CD8-positive, alpha-beta T cell (primary cell): ENCODE measurements at regions of chr2 and their contacts with region 1.

Region 1: DNA sequence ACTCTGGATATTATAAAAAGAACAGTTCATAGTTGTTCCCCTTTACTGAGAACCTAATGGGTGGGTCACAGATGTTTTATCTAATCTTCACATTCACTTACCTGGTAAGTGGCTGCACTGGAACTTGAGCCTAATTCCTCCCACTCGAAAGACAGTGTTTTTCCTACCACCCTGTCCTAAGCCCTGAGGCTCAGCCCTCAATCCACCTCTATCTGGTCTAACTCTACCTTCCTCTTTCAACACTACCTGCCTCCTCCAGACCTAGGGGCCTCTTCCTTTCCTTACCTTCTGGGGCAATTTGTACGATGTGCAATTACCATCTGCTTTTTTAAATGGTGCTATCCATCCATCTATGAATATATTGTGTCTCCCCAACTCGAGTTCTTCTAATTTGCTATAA is 9.7 kb upstream of the KIF3C start:
- DNase-seq: no peak
- ATAC-seq: no peak
- H3K4me3 ChIP-seq: no peak overlapping the region
- H3K4me3 Mint-ChIP-seq: peak overlapping the region; percentile 79
- H3K27ac ChIP-seq: no peak overlapping the region
- H3K27ac Mint-ChIP-seq: no peak overlapping the region
- H3K4me1 ChIP-seq: no peaks in the 10 kb centered on the region
- H3K4me1 Mint-ChIP-seq: peaks cover 6% of the 10 kb centered on the region
- H3K27me3 ChIP-seq: peaks cover 0 to 2% of the 10 kb centered on the region in 2 experiments
- H3K27me3 Mint-ChIP-seq: no peaks in the 10 kb centered on the region
- CTCF ChIP-seq: no peak

Region 2: DNA sequence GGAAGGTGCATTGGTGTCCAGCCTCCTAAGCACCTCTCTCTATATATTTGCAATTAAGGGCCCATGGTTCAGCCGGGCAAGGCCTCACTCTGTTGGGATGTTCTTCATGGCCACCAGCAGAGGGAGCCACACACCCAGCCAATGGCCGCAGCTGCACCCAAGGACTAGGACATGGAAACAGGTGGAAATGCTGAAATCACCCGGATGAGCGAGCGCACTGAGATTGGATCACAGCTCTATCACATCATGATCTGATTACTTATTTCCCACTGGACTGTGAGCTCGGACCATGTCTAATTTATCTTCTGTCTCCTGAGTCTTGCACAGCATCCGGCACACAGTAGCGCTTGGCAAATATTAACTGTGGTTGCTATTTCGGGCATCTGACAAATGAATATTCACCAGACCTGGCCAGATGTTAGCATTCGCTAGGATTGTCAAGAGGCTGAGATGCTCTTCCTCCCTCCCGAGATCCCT is 40.9 kb before region 1 on chr2:
- CTCF ChIA-PET with region 1: interaction called, 8 read pairs
- POLR2A ChIA-PET with region 1: no interaction called
- intact Hi-C with region 1: loop called in 1 of 2 experiments (anchors 1 kb)
- DNase-seq: peak; percentile 42 to 84 (median 67)
- ATAC-seq: peak; percentile 96
- H3K4me3 ChIP-seq: no peak overlapping the region
- H3K4me3 Mint-ChIP-seq: no peak overlapping the region
- H3K27ac ChIP-seq: no peak overlapping the region
- H3K27ac Mint-ChIP-seq: no peak overlapping the region
- H3K4me1 ChIP-seq: no peaks in the 10 kb centered on the region
- H3K4me1 Mint-ChIP-seq: peaks cover 2% of the 10 kb centered on the region
- H3K27me3 ChIP-seq: no peaks in the 10 kb centered on the region
- H3K27me3 Mint-ChIP-seq: no peaks in the 10 kb centered on the region
- CTCF ChIP-seq: peak; percentile 89

Region 3: GRCh38 chr2:26011990-26012856 is 20.3 kb after region 1 on chr2:
- CTCF ChIA-PET with region 1: no interaction called
- POLR2A ChIA-PET with region 1: no interaction called
- intact Hi-C with region 1: no loop called
- DNase-seq: no peak
- ATAC-seq: no peak
- H3K4me3 ChIP-seq: no peak overlapping the region
- H3K4me3 Mint-ChIP-seq: no peak overlapping the region
- H3K27ac ChIP-seq: no peak overlapping the region
- H3K27ac Mint-ChIP-seq: no peak overlapping the region
- H3K4me1 ChIP-seq: no peaks in the 10 kb centered on the region
- H3K4me1 Mint-ChIP-seq: no peaks in the 10 kb centered on the region
- H3K27me3 ChIP-seq: no peaks in the 10 kb centered on the region
- H3K27me3 Mint-ChIP-seq: no peaks in the 10 kb centered on the region
- CTCF ChIP-seq: no peak

Region 4: DNA sequence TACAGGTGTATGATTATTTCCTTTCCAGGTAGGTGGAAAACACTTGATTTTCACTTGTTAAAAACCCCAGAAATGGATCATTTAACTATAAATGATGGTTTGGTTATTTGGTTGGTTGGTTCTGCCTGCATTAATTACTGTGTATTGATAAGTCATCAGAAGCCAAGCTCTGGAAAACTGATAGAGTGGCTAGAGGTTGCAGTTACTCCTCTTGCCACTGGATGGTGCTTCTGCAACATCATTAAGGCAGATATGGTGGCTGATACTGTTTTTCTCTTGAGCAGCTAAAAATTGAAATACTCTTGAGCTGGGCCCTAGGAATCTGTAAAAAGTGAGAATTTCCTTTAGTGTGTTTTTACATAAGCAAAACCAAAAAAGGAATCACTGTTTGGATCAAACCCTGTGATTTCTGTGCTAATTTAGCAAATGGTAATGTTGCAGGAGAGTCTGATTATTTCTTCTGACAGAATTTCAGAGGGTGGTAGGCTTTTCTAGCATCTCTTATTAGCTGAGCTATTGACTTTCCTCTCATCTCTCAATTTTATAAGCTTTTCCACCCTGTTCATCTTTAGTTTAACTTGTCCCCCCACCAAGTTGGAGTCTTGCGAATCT is 96.2 kb after region 1 on chr2:
- CTCF ChIA-PET with region 1: interaction called, 10 read pairs
- POLR2A ChIA-PET with region 1: no interaction called
- intact Hi-C with region 1: no loop called
- DNase-seq: peak in 4 of 9 experiments; percentile 9 to 61 (median 32)
- ATAC-seq: peak; percentile 69
- H3K4me3 ChIP-seq: no peak overlapping the region
- H3K4me3 Mint-ChIP-seq: no peak overlapping the region
- H3K27ac ChIP-seq: no peak overlapping the region
- H3K27ac Mint-ChIP-seq: no peak overlapping the region
- H3K4me1 ChIP-seq: peaks cover 4% of the 10 kb centered on the region
- H3K4me1 Mint-ChIP-seq: peaks cover 61% of the 10 kb centered on the region
- H3K27me3 ChIP-seq: no peaks in the 10 kb centered on the region
- H3K27me3 Mint-ChIP-seq: no peaks in the 10 kb centered on the region
- CTCF ChIP-seq: peak; percentile 69

Region 5: GRCh38 chr2:26561918-26562810 is 570.2 kb after region 1 on chr2:
- CTCF ChIA-PET with region 1: no interaction called
- POLR2A ChIA-PET with region 1: no interaction called
- intact Hi-C with region 1: no loop called
- DNase-seq: peak in 5 of 9 experiments; percentile 10 to 45 (median 18)
- ATAC-seq: peak; percentile 62
- H3K4me3 ChIP-seq: peak overlapping the region in 1 of 2 experiments; percentile 13
- H3K4me3 Mint-ChIP-seq: peak overlapping the region; percentile 26
- H3K27ac ChIP-seq: no peak overlapping the region
- H3K27ac Mint-ChIP-seq: no peak overlapping the region
- H3K4me1 ChIP-seq: peaks cover 6% of the 10 kb centered on the region
- H3K4me1 Mint-ChIP-seq: peaks cover 6% of the 10 kb centered on the region
- H3K27me3 ChIP-seq: peaks cover 4 to 18% of the 10 kb centered on the region in 2 experiments
- H3K27me3 Mint-ChIP-seq: peaks cover 62% of the 10 kb centered on the region
- CTCF ChIP-seq: no peak